ENCODE measurements at regions of chr14 and their contacts with region 1.

Region 1: GRCh38 chr14:102524466-102525218 is 15.1 kb upstream of the ANKRD9 start:
- DNase-seq: peak; percentile 89 to 93 (median 90)
- H3K4me3 ChIP-seq: peak overlapping the region; percentile 44 to 79 (median 51)
- H3K4me3 Mint-ChIP-seq: peak overlapping the region; percentile 79 to 91
- H3K27ac ChIP-seq: peak overlapping the region; percentile 76 to 90
- H3K27ac Mint-ChIP-seq: peak overlapping the region; percentile 83 to 96 (median 92)
- H3K4me1 ChIP-seq: peaks cover 50 to 69% of the 10 kb centered on the region in 2 donors
- H3K4me1 Mint-ChIP-seq: peaks cover 49% of the 10 kb centered on the region
- H3K27me3 ChIP-seq: no peaks in the 10 kb centered on the region
- H3K27me3 Mint-ChIP-seq: peaks cover 1 to 16% (median 14%) of the 10 kb centered on the region in 3 donors
- CTCF ChIP-seq: peak; percentile 97

Region 2: GRCh38 chr14:102437997-102438915 is 86.4 kb before region 1 on chr14:
- intact Hi-C with region 1: no loop called
- DNase-seq: peak; percentile 64 to 72 (median 66)
- H3K4me3 ChIP-seq: no peak overlapping the region
- H3K4me3 Mint-ChIP-seq: peak overlapping the region in 1 of 2 donors; percentile 53
- H3K27ac ChIP-seq: no peak overlapping the region
- H3K27ac Mint-ChIP-seq: no peak overlapping the region
- H3K4me1 ChIP-seq: peaks cover 0 to 6% of the 10 kb centered on the region in 2 donors
- H3K4me1 Mint-ChIP-seq: peaks cover 5% of the 10 kb centered on the region
- H3K27me3 ChIP-seq: no peaks in the 10 kb centered on the region
- H3K27me3 Mint-ChIP-seq: no peaks in the 10 kb centered on the region
- CTCF ChIP-seq: peak; percentile 82

Region 3: GRCh38 chr14:102560458-102561154 is 36.0 kb after region 1 on chr14:
- intact Hi-C with region 1: loop called (anchors 5 kb)
- DNase-seq: peak in 2 of 3 donors; percentile 23 to 40
- H3K4me3 ChIP-seq: no peak overlapping the region
- H3K4me3 Mint-ChIP-seq: no peak overlapping the region
- H3K27ac ChIP-seq: no peak overlapping the region
- H3K27ac Mint-ChIP-seq: no peak overlapping the region
- H3K4me1 ChIP-seq: peaks cover 31 to 36% of the 10 kb centered on the region in 2 donors
- H3K4me1 Mint-ChIP-seq: peaks cover 23% of the 10 kb centered on the region
- H3K27me3 ChIP-seq: no peaks in the 10 kb centered on the region
- H3K27me3 Mint-ChIP-seq: peaks cover 0 to 4% (median 2%) of the 10 kb centered on the region in 3 donors
- CTCF ChIP-seq: no peak

Region 4: GRCh38 chr14:102568114-102568621 is 43.5 kb after region 1 on chr14:
- intact Hi-C with region 1: loop called (anchors 5 kb)
- DNase-seq: no peak
- H3K4me3 ChIP-seq: peak overlapping the region in 1 of 3 experiments; percentile 30
- H3K4me3 Mint-ChIP-seq: peak overlapping the region in 1 of 2 donors; percentile 67
- H3K27ac ChIP-seq: no peak overlapping the region
- H3K27ac Mint-ChIP-seq: peak overlapping the region in 4 of 7 donors; percentile 33 to 84 (median 73)
- H3K4me1 ChIP-seq: peaks cover 48 to 50% of the 10 kb centered on the region in 2 donors
- H3K4me1 Mint-ChIP-seq: peaks cover 44% of the 10 kb centered on the region
- H3K27me3 ChIP-seq: no peaks in the 10 kb centered on the region
- H3K27me3 Mint-ChIP-seq: peaks cover 1 to 4% (median 1%) of the 10 kb centered on the region in 3 donors
- CTCF ChIP-seq: no peak

Region 5: DNA sequence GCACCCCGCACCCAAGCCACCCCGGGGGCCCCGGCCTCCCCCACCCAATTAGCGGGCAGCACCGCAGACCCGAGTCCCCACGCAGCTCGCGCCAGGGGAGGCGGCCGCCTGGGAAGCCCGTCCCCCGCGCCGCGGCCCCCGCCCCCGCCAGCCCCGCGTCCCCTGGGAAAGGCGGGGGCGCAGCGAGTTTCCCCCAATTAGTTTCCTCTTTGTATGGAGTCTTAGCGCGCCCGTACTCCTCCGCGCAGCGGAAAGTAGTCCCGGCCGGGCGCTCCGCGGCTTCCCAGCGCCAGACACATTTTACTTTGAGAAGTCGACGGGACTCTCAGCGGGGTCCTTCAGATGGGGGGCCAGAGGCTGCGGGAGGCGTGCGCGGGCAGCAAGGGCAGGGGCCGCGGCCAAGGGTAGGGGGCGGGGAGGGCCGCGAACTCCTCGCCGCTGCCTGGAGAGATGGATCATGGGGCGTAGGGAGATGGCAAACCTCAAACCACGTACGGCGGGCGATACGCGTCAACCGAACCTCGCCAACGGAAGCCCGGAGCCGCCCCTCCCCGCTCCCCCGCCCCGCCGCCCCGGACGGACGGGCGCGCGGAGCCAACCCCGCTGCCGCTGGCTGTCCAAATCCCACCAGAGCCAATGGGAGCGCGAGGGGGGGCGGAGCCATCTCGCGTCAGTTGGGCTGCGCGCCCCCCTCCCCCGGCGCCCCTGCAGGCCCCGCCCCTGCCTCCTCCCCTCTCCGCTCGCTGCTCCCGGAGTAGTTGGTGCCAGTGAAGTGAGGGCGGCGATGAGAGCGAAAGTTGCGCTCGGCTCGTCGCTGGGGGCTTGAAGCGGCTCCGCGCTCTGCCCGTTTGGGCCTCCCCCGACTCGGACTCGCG is 67.5 kb after region 1 on chr14 and contains the start of gene RCOR1:
- intact Hi-C with region 1: loop called (anchors 2 to 5 kb)
- DNase-seq: peak; percentile 94 to 98 (median 97)
- H3K4me3 ChIP-seq: peak within 1 kb of the TSS; percentile 86 to 99 (median 97)
- H3K4me3 Mint-ChIP-seq: peak within 1 kb of the TSS; percentile 99
- H3K27ac ChIP-seq: peak within 1 kb of the TSS; percentile 89 to 94
- H3K27ac Mint-ChIP-seq: peak within 1 kb of the TSS; percentile 94 to 99 (median 97)
- H3K4me1 ChIP-seq: peaks cover 16 to 26% of the 10 kb centered on the region in 2 donors
- H3K4me1 Mint-ChIP-seq: peaks cover 32% of the 10 kb centered on the region
- H3K27me3 ChIP-seq: no peaks in the 10 kb centered on the region
- H3K27me3 Mint-ChIP-seq: peaks cover 1 to 9% (median 7%) of the 10 kb centered on the region in 3 donors
- CTCF ChIP-seq: no peak
- polyA plus RNA-seq, gene RCOR1: 2.1 to 36.6 (median 2.3) TPM

Measured in CD14-positive monocyte (primary cell).